HCT116 (cell line): ENCODE measurements at regions of chr3 and their contacts with region 1.

Region 1: DNA sequence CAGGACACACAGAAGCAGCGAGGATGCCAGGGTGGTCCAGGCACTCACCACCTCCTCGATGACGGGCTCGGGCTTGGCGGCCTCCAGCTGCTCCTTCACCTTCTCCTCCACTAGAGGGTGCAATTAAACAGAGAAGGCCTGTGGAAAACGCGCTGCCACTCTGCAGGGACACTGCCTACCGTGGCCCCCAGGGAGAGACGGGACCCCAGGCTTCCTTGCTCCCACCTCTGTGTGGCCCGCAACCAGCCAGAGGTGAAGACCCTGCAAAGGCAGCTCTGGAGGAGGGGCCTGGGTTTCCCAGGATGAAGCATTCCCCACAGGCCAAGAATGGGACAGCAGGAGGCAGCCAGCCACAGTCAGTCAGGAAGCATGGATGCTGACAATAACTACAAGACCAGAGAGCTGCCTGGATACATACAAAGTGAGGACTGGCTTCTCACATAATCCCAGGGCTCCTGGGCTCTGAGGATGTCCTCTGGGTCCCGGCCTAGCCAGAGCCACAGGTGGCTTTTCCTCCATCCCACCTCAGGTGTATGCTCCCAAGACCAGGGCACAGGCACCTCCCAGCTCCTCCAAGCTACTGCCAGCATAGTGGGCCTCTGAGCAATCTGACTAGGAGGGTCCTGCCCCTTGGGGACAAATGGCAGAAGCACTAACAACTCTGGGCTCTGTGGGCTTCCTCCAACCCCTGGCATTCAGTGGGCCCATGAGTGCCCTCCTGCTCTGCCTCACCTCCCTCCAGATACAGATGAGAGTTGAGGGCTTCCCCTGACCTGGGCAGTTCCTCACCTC is 46.2 kb downstream of the PTH1R start:
- DNase-seq: no peak
- ATAC-seq: peak; percentile 86
- H3K4me3 ChIP-seq: no peak overlapping the region
- H3K27ac ChIP-seq: no peak overlapping the region
- H3K4me1 ChIP-seq: no peaks in the 10 kb centered on the region
- H3K27me3 ChIP-seq: no peaks in the 10 kb centered on the region
- CTCF ChIP-seq: peak; percentile 65 to 95 (median 82)
- POLR2A ChIP-seq: no peak
- RAD21 ChIP-seq: peak; percentile 87

Region 2: DNA sequence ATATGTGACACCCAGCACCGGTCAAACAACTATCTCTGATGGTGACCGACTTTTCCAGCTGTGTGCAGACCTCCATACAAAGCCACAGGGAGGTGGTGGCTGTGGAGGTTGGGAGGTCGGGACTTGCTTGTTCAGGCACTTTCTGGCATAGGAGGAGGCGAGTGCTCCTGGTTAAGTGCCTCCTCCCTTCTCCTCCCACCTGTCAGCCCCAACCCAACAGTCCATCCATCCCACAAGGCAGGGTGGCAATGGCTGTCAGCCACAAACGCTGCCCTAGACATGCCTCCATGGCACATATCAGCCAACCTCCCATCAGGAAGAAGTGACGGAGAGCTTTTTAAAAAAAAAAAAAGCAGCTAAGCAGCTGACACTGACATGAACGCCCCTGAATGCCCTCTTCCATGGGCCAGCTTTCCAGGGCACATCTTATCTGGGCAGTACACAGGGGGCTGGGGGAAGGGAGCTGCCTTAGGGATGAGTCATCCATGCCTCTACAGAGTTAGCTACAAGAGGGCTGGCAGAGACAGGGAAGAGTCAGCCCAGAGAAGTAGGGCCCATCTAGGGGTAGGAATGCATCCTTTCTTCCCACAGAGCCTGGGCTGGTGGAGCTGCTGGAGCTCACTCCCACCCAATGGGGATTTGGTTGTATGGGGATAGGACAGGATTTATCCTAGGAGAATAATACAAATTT is 11.6 kb after region 1 on chr3:
- CTCF ChIA-PET with region 1: interaction called, 16 read pairs
- POLR2A ChIA-PET with region 1: no interaction called
- RAD21 ChIA-PET with region 1: no interaction called
- intact Hi-C with region 1: no loop called
- DNase-seq: peak; percentile 65
- ATAC-seq: peak; percentile 94
- H3K4me3 ChIP-seq: peak overlapping the region in 1 of 2 experiments; percentile 28; a peak in 2 of 4 replicates
- H3K27ac ChIP-seq: peak overlapping the region; percentile 53
- H3K4me1 ChIP-seq: peaks cover 58 to 78% of the 10 kb centered on the region in 2 experiments
- H3K27me3 ChIP-seq: no peaks in the 10 kb centered on the region
- CTCF ChIP-seq: peak in 2 of 3 experiments; percentile 60 to 71; a peak in 4 of 6 replicates
- POLR2A ChIP-seq: no peak
- RAD21 ChIP-seq: peak; percentile 39

Region 3: GRCh38 chr3:46998121-46998851 is 74.5 kb after region 1 on chr3:
- CTCF ChIA-PET with region 1: no interaction called
- POLR2A ChIA-PET with region 1: no interaction called
- RAD21 ChIA-PET with region 1: interaction called in 1 of 2 experiments, 3 read pairs
- intact Hi-C with region 1: loop called (anchors 1 kb)
- DNase-seq: peak; percentile 59
- ATAC-seq: peak; percentile 89
- H3K4me3 ChIP-seq: no peak overlapping the region
- H3K27ac ChIP-seq: peak overlapping the region; percentile 15; the same call in 1 of the 2 replicates
- H3K4me1 ChIP-seq: peaks cover 0 to 15% of the 10 kb centered on the region in 2 experiments; a peak in 1 of 4 replicates
- H3K27me3 ChIP-seq: no peaks in the 10 kb centered on the region
- CTCF ChIP-seq: peak; percentile 85 to 92 (median 90)
- POLR2A ChIP-seq: no peak
- RAD21 ChIP-seq: peak; percentile 97

Region 4: GRCh38 chr3:47243419-47244147 is 319.8 kb after region 1 on chr3:
- CTCF ChIA-PET with region 1: no interaction called
- POLR2A ChIA-PET with region 1: no interaction called
- RAD21 ChIA-PET with region 1: no interaction called
- intact Hi-C with region 1: no loop called
- DNase-seq: no peak
- ATAC-seq: no peak
- H3K4me3 ChIP-seq: no peak overlapping the region
- H3K27ac ChIP-seq: no peak overlapping the region
- H3K4me1 ChIP-seq: no peaks in the 10 kb centered on the region
- H3K27me3 ChIP-seq: no peaks in the 10 kb centered on the region
- CTCF ChIP-seq: no peak
- POLR2A ChIP-seq: no peak
- RAD21 ChIP-seq: no peak

Region 5: GRCh38 chr3:47324278-47324865 is 400.6 kb after region 1 on chr3:
- CTCF ChIA-PET with region 1: interaction called, 3 read pairs
- POLR2A ChIA-PET with region 1: no interaction called
- RAD21 ChIA-PET with region 1: no interaction called
- intact Hi-C with region 1: loop called (anchors 5 kb)
- DNase-seq: peak; percentile 48
- ATAC-seq: peak; percentile 79
- H3K4me3 ChIP-seq: no peak overlapping the region
- H3K27ac ChIP-seq: 0 out of 2 replicates have a peak overlapping the region, but pooled peaks have one; percentile 15
- H3K4me1 ChIP-seq: peaks cover 8 to 20% of the 10 kb centered on the region in 2 experiments
- H3K27me3 ChIP-seq: no peaks in the 10 kb centered on the region
- CTCF ChIP-seq: peak; percentile 69 to 85 (median 81)
- POLR2A ChIP-seq: no peak
- RAD21 ChIP-seq: peak; percentile 85